Sigmoid colon (tissue), 7 donors: ENCODE measurements at regions of chr6 and their contacts with region 1.

Region 1: DNA sequence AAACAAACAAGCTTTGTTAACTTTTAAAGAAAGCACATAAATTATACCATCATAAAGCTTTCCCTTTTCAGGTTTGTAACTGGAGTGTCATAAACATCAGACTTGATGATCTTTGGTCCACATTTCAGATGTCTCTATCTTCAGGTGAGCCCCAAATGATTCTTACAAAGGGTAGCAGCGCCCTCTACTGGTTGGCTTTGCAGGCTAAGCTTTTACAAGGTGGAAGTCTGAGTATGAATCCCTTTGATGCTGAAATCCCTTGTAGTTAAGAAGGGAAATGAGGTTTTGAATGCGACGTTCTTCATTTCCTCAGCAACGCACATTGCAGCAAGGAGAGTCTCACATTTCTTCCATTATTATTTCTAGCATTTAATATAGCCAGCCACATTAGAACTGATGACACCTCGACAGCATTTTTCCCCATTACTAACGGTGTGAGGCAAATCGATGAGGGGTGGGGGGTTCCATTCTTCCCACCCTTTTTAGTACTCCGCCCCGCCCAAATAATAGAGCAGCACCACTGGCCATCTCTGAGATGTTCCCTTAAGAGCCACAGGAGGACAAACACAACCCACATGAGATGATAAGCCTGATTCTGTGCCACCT is 126.3 kb upstream of the NT5E start:
- DNase-seq: peak; percentile 68
- H3K4me3 ChIP-seq: no peak overlapping the region
- H3K27ac ChIP-seq: no peak overlapping the region
- H3K4me1 ChIP-seq: no peaks in the 10 kb centered on the region
- H3K27me3 ChIP-seq: no peaks in the 10 kb centered on the region
- CTCF ChIP-seq: peak in 3 of 4 experiments; percentile 37 to 61 (median 48)
- EP300 ChIP-seq: no peak
- POLR2A ChIP-seq: no peak

Region 2: DNA sequence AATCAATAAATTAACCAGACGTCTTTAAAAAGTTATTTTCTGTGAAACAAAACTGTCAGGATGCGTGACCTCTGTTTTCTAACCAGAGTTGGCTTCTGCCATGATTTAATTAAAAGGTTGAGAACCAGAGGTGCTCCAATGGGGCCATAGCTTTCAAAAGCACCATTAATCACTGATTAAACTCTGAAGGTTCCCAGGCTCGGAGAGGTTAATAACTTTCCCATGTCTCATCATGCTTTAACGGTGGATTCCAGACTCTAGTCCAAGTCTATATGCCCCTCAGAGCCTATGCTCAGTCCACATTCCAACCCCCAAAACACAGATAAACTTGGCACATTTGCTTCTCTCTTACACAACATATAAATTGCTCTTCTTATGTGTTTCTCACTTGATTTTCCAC is 1710.2 kb before region 1 on chr6:
- intact Hi-C with region 1: loop called (anchors 5 kb)
- DNase-seq: no peak
- H3K4me3 ChIP-seq: no peak overlapping the region
- H3K27ac ChIP-seq: no peak overlapping the region
- H3K4me1 ChIP-seq: no peaks in the 10 kb centered on the region
- H3K27me3 ChIP-seq: no peaks in the 10 kb centered on the region
- CTCF ChIP-seq: no peak
- EP300 ChIP-seq: no peak
- POLR2A ChIP-seq: no peak

Region 3: GRCh38 chr6:83884523-83884922 is 1439.0 kb before region 1 on chr6:
- intact Hi-C with region 1: loop called (anchors 10 kb)
- DNase-seq: no peak
- H3K4me3 ChIP-seq: no peak overlapping the region
- H3K27ac ChIP-seq: no peak overlapping the region
- H3K4me1 ChIP-seq: peaks cover 0 to 4% (median 2%) of the 10 kb centered on the region in 4 donors
- H3K27me3 ChIP-seq: no peaks in the 10 kb centered on the region
- CTCF ChIP-seq: peak in 3 of 4 experiments; percentile 58 to 61 (median 59)
- EP300 ChIP-seq: no peak
- POLR2A ChIP-seq: no peak

Region 4: GRCh38 chr6:84428300-84428907 is 895.1 kb before region 1 on chr6:
- intact Hi-C with region 1: loop called (anchors 5 kb)
- DNase-seq: no peak
- H3K4me3 ChIP-seq: no peak overlapping the region
- H3K27ac ChIP-seq: no peak overlapping the region
- H3K4me1 ChIP-seq: no peaks in the 10 kb centered on the region
- H3K27me3 ChIP-seq: peaks cover 0 to 14% (median 0%) of the 10 kb centered on the region in 3 donors
- CTCF ChIP-seq: peak in 1 of 4 experiments; percentile 24
- EP300 ChIP-seq: no peak
- POLR2A ChIP-seq: no peak